Activated CD4-positive, alpha-beta T cell treated with anti-CD3 and anti-CD28 coated beads for 36 hours (primary cell): ENCODE measurements at regions of chr11 and their contacts with region 1.

Region 1: DNA sequence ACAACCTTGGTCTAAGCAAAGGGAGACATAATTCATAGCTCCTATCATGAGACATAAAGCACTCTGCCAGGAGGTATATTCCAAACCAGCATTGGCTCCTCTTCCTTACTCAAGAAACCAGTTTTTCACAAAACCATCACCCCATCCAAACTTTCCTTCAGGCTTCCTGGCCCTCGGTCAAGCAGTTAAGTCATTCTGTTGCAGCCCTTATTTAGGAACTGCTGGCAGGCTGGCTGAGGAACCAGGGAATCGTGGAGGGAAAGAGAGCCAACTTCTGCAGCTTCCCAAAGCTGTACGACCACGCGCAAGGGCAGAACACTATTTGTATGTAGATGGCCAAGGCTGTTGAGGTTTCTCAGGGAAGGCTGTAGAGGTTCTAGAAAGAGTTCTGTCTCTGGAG is 680 bp downstream of the IFT46 start:
- DNase-seq: no peak
- ATAC-seq: no peak
- H3K4me3 Mint-ChIP-seq: peak overlapping the region; percentile 90
- H3K27ac Mint-ChIP-seq: peak overlapping the region; percentile 76
- H3K4me1 Mint-ChIP-seq: peaks cover 16% of the 10 kb centered on the region
- H3K27me3 Mint-ChIP-seq: no peaks in the 10 kb centered on the region

Region 2: GRCh38 chr11:118359295-118359958 is 205.6 kb before region 1 on chr11 and contains the start of gene UBE4A:
- CTCF ChIA-PET with region 1: no interaction called
- POLR2A ChIA-PET with region 1: no interaction called
- intact Hi-C with region 1: loop called in 1 of 2 experiments (anchors 1 kb)
- DNase-seq: peak; percentile 99
- ATAC-seq: peak; percentile 96
- H3K4me3 Mint-ChIP-seq: peak within 1 kb of the TSS; percentile 100
- H3K27ac Mint-ChIP-seq: peak within 1 kb of the TSS; percentile 97
- H3K4me1 Mint-ChIP-seq: peaks cover 43% of the 10 kb centered on the region
- H3K27me3 Mint-ChIP-seq: no peaks in the 10 kb centered on the region
- total RNA-seq, gene UBE4A: 44.2 to 50.7 TPM

Region 3: DNA sequence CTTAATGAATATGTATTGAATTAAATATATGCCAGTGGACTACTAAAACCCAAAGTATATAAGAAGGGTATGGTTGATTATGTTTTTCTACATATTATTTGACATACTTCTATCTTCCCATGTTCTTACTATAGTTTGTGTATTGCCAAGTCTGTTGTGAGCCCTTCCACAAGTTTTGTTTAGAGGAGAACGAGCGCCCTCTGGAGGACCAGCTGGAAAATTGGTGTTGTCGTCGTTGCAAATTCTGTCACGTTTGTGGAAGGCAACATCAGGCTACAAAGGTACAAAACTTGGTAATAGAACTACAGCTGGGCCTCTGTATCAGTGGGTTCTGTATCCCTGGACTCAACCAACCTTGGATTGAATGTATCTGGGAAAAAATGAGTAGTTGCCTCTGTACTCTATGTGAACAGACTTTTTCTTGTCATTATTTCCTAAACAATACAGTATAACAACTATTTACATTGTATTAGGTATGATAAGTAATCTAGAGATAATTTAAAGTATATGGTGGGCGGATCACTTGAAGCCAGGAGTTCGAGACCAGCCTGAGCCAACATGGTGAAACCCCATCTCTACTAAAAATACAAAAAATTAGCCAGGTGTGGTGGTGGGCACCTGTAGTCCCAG is 76.5 kb before region 1 on chr11:
- CTCF ChIA-PET with region 1: interaction called, 3 read pairs
- POLR2A ChIA-PET with region 1: no interaction called
- intact Hi-C with region 1: loop called in 1 of 2 experiments (anchors 5 kb)
- DNase-seq: peak; percentile 90
- ATAC-seq: peak; percentile 71
- H3K4me3 Mint-ChIP-seq: no peak overlapping the region
- H3K27ac Mint-ChIP-seq: peak overlapping the region; percentile 10
- H3K4me1 Mint-ChIP-seq: peaks cover 5% of the 10 kb centered on the region
- H3K27me3 Mint-ChIP-seq: no peaks in the 10 kb centered on the region

Region 4: GRCh38 chr11:118514103-118514502 is 50.9 kb before region 1 on chr11:
- CTCF ChIA-PET with region 1: interaction called, 3 read pairs
- POLR2A ChIA-PET with region 1: no interaction called
- intact Hi-C with region 1: loop called in 1 of 2 experiments (anchors 10 kb)
- DNase-seq: no peak
- ATAC-seq: no peak
- H3K4me3 Mint-ChIP-seq: no peak overlapping the region
- H3K27ac Mint-ChIP-seq: peak overlapping the region; percentile 20
- H3K4me1 Mint-ChIP-seq: peaks cover 7% of the 10 kb centered on the region
- H3K27me3 Mint-ChIP-seq: no peaks in the 10 kb centered on the region

Region 5: DNA sequence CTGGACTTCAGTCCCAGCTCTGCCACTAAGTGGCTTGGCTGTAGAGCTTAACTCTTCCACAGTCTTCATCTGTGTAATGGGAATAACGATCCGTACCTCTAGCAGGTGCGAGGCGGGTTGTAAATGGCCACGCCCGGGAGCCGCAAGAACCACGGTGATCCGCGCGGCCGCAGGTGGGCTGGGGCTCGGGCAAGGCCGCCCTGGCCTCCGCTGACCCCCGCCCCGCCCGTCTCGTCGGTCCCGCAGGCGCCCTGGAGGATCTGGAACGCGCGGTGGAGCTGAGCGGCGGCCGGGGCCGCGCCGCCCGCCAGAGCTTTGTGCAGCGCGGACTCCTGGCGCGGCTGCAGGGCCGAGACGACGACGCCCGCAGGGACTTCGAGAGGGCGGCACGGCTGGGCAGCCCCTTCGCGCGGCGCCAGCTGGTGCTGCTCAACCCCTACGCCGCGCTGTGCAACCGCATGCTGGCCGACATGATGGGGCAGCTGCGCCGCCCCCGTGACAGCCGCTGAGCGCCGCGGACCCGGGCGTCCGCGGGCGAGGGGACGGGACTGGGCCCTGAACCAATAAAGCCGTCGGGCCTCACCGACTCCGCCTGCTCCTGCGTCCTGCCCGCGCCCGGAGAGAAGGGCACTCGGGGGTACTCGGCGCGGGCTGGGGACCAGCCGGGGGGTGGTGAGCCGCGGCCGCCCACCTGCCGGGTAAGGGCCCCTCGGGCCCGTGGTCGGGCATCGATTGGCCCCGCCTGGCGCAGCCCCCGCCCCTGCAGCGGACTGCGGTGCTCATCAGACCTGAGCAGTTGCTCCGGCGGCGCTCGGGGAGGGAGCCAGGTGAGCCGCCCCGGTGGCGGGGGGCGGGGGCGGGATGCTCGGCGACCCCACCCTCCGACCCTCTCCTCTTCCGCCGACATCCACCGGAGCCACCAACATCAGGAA is 34.4 kb before region 1 on chr11 and contains the start of gene TMEM25:
- CTCF ChIA-PET with region 1: interaction called, 4 read pairs
- POLR2A ChIA-PET with region 1: no interaction called
- intact Hi-C with region 1: loop called in 1 of 2 experiments (anchors 5 kb)
- DNase-seq: peak; percentile 87
- ATAC-seq: peak; percentile 90
- H3K4me3 Mint-ChIP-seq: peak within 1 kb of the TSS; percentile 82
- H3K27ac Mint-ChIP-seq: peak within 1 kb of the TSS; percentile 75
- H3K4me1 Mint-ChIP-seq: peaks cover 27% of the 10 kb centered on the region
- H3K27me3 Mint-ChIP-seq: no peaks in the 10 kb centered on the region
- total RNA-seq, gene TMEM25: 12.2 to 17.4 TPM

Region 6: DNA sequence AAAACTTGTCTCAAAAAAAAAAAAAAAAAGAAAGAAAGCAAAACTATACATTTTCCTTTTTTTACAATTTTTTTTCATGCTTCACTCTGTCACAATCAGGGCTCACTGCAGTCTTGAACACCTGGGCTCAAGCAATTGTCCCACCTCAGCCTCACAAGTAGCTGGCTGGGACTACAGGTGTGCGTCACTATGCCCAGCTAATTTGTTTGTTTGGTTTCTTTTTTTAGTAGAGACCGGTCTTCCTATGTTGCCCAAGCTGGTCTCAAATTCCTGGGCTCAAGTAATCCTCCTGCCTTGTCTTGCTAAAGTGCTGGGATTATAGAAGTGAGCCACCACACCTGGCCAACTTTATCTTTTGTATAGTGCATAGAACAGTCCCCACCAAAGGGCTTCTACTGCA is 303.6 kb after region 1 on chr11:
- CTCF ChIA-PET with region 1: no interaction called
- POLR2A ChIA-PET with region 1: no interaction called
- intact Hi-C with region 1: no loop called
- DNase-seq: no peak
- ATAC-seq: no peak
- H3K4me3 Mint-ChIP-seq: no peak overlapping the region
- H3K27ac Mint-ChIP-seq: peak overlapping the region; percentile 42
- H3K4me1 Mint-ChIP-seq: peaks cover 37% of the 10 kb centered on the region
- H3K27me3 Mint-ChIP-seq: no peaks in the 10 kb centered on the region